ENCODE measurements at regions of chr7 and their contacts with region 1.

Region 1: DNA sequence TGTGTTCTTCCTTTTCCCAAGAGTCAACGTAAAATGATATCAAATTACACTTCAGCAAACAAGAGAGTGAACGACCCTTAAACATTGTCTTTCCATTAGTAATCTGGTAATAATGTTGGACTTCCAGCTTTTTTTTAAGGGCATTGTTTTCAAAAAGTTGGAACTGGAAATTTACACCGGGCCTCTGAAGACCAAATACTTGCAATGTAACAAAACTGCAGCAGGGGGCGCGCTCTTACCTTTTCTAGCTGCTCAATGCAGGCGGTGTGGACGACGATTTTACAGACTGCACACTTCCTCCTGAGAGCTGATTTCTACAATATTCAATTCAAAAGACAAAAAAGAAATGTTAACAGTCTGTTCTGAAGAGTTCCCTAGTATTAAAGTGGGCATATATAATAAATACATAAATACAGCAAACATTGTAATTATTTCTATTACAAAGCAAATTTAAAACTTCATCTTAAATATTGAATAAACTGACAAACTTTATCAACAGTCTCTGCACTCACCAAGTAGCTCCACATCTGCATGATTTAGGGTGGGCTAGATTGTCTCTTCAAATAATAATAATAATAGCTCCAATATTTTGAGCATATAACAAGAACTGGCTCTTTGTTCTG is 190.4 kb downstream of the DGKI start:
- DNase-seq: peak; percentile 44
- H3K4me3 ChIP-seq: no peak overlapping the region
- H3K27ac ChIP-seq: no peak overlapping the region
- H3K27me3 ChIP-seq: no peaks in the 10 kb centered on the region
- CTCF ChIP-seq: peak; percentile 92

Region 2: GRCh38 chr7:137606061-137606674 is 50.2 kb before region 1 on chr7:
- CTCF ChIA-PET with region 1: interaction called, 35 read pairs
- POLR2A ChIA-PET with region 1: no interaction called
- DNase-seq: peak; percentile 13
- H3K4me3 ChIP-seq: no peak overlapping the region
- H3K27ac ChIP-seq: no peak overlapping the region
- H3K27me3 ChIP-seq: no peaks in the 10 kb centered on the region
- CTCF ChIP-seq: peak; percentile 45

Region 3: DNA sequence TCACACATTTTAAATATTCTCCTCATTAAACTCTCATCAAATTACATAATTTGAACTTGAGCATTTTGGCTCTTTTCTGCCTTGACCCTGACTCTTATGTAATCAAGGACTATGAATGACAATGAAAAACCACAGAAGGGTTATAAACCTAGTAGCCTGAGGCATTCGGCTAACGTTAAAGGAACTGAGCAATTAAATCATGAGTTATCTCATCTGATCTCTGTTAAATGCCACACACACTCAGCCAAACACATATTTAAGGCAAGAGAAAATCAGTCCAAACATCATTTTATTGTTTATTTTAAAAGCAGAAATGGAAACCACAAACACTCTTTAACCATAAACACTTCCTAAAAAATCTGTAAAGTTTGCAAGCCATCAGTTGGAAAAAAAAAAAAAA is 13.9 kb before region 1 on chr7:
- CTCF ChIA-PET with region 1: interaction called, 51 read pairs
- POLR2A ChIA-PET with region 1: no interaction called
- DNase-seq: peak; percentile 6
- H3K4me3 ChIP-seq: no peak overlapping the region
- H3K27ac ChIP-seq: no peak overlapping the region
- H3K27me3 ChIP-seq: no peaks in the 10 kb centered on the region
- CTCF ChIP-seq: no peak

Region 4: GRCh38 chr7:137772748-137773147 is 116.4 kb after region 1 on chr7:
- CTCF ChIA-PET with region 1: interaction called, 13 read pairs
- POLR2A ChIA-PET with region 1: no interaction called
- DNase-seq: peak; percentile 15
- H3K4me3 ChIP-seq: no peak overlapping the region
- H3K27ac ChIP-seq: no peak overlapping the region
- H3K27me3 ChIP-seq: no peaks in the 10 kb centered on the region
- CTCF ChIP-seq: no peak

Region 5: GRCh38 chr7:137839903-137840779 is 183.8 kb after region 1 on chr7:
- CTCF ChIA-PET with region 1: interaction called, 38 read pairs
- POLR2A ChIA-PET with region 1: interaction called, 4 read pairs
- DNase-seq: no peak
- H3K4me3 ChIP-seq: no peak overlapping the region
- H3K27ac ChIP-seq: no peak overlapping the region
- H3K27me3 ChIP-seq: no peaks in the 10 kb centered on the region
- CTCF ChIP-seq: no peak

Region 6: GRCh38 chr7:137882261-137882668 is 225.9 kb after region 1 on chr7:
- CTCF ChIA-PET with region 1: interaction called, 119 read pairs
- POLR2A ChIA-PET with region 1: no interaction called
- DNase-seq: peak; percentile 93
- H3K4me3 ChIP-seq: no peak overlapping the region
- H3K27ac ChIP-seq: peak overlapping the region; percentile 85
- H3K27me3 ChIP-seq: no peaks in the 10 kb centered on the region
- CTCF ChIP-seq: no peak

Region 7: GRCh38 chr7:138008547-138009349 is 352.4 kb after region 1 on chr7:
- CTCF ChIA-PET with region 1: interaction called, 50 read pairs
- POLR2A ChIA-PET with region 1: no interaction called
- DNase-seq: no peak
- H3K4me3 ChIP-seq: no peak overlapping the region
- H3K27ac ChIP-seq: no peak overlapping the region
- H3K27me3 ChIP-seq: peaks cover 4% of the 10 kb centered on the region
- CTCF ChIP-seq: peak; percentile 89